ENCODE measurements at regions of chr1 and their contacts with region 1.

Region 1: GRCh38 chr1:107529502-107530149 is 388.8 kb downstream of the NTNG1 start:
- DNase-seq: peak; percentile 64
- ATAC-seq: peak; percentile 37
- H3K4me3 ChIP-seq: no peak overlapping the region
- H3K27ac ChIP-seq: no peak overlapping the region
- H3K4me1 ChIP-seq: peaks cover 70% of the 10 kb centered on the region
- H3K27me3 ChIP-seq: no peaks in the 10 kb centered on the region
- CTCF ChIP-seq: peak; percentile 89
- EP300 ChIP-seq: no peak
- POLR2A ChIP-seq: no peak
- RAD21 ChIP-seq: peak; percentile 80

Region 2: DNA sequence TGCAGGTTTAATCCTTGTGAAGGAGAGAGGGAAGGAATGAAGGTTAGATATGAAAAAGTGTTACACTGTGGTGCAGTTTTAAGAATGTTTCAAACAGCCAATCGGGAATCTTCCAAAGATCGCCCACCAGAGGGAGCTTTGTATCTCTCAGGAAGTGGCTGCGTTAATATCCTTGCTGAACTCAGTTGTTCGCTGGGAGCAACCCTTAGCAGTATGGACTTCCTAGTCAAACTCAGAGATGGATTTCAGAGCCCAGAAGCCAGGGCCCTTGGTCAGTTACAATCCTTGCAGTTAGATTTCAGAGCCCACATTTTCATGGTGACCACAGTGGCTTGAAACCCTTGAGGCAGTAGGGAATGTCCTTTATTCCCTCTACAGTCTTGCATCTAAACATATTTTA is 252.6 kb before region 1 on chr1:
- CTCF ChIA-PET with region 1: interaction called, 7 read pairs
- POLR2A ChIA-PET with region 1: no interaction called
- in situ Hi-C with region 1: loop called (anchors 5 kb)
- intact Hi-C with region 1: loop called (anchors 1 kb)
- DNase-seq: peak; percentile 46
- ATAC-seq: peak; percentile 83
- H3K4me3 ChIP-seq: no peak overlapping the region
- H3K27ac ChIP-seq: no peak overlapping the region
- H3K4me1 ChIP-seq: no peaks in the 10 kb centered on the region
- H3K27me3 ChIP-seq: no peaks in the 10 kb centered on the region
- CTCF ChIP-seq: peak; percentile 72
- EP300 ChIP-seq: no peak
- POLR2A ChIP-seq: no peak
- RAD21 ChIP-seq: peak; percentile 42; the same call in 1 of the 2 replicates

Region 3: DNA sequence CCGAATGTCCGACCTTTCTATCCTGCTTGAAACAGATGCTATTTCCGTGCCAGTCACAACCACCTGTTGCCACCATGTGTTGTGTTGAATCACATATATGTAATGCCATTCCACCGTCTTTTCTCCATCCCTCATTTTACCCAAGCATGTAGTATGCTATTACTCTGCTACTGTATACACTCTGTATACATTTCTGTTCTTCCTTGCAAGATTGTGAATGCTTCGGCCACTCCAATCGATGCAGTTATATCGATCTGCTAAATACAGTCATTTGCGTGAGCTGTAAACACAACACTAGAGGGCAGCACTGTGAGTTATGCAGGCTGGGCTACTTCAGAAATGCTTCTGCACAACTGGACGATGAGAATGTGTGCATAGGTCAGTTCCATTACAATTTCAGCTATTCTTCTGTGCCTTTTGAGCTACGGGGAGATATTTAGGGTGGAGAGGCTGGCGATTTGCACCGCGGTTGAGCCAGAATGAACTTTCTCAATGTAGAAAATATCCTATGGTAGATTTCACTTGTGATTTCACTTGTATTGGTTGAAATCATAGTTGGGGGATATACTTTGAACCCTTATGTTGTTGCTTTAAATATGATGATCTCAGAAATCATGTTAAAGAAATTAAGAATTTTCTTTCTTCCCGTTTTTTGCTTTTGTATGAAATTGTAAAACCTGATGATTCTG is 98.9 kb before region 1 on chr1:
- CTCF ChIA-PET with region 1: interaction called, 26 read pairs
- POLR2A ChIA-PET with region 1: interaction called, 3 read pairs
- in situ Hi-C with region 1: loop called (anchors 5 kb)
- intact Hi-C with region 1: loop called (anchors 1 kb)
- DNase-seq: peak; percentile 67
- ATAC-seq: peak; percentile 98
- H3K4me3 ChIP-seq: no peak overlapping the region; a peak in 1 of 6 replicates
- H3K27ac ChIP-seq: no peak overlapping the region
- H3K4me1 ChIP-seq: peaks cover 7% of the 10 kb centered on the region; the same call in 1 of the 2 replicates
- H3K27me3 ChIP-seq: no peaks in the 10 kb centered on the region
- CTCF ChIP-seq: peak; percentile 92
- EP300 ChIP-seq: no peak
- POLR2A ChIP-seq: no peak
- RAD21 ChIP-seq: peak; percentile 71

Region 4: DNA sequence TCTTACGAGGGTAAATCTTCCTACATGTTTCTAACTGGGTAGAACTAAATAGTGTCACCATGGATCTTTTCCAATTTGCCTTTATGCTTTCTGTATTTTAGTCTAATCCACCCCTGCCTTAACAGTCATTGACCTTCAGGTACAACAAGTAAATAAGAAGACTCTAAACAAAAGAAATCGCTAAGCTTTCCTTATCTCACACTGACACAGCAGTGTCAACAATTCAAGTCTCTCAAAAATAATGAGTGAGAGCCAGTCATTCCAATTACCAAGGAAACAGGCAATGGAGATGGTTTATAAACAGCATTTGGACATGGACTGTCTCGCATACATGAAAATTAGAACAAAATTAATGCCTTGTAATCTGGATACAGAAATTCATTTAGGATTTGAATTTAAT is 69.6 kb after region 1 on chr1:
- CTCF ChIA-PET with region 1: no interaction called
- POLR2A ChIA-PET with region 1: interaction called, 8 read pairs
- in situ Hi-C with region 1: no loop called
- intact Hi-C with region 1: loop called (anchors 5 kb)
- DNase-seq: peak; percentile 18
- ATAC-seq: no peak
- H3K4me3 ChIP-seq: no peak overlapping the region
- H3K27ac ChIP-seq: peak overlapping the region; percentile 69
- H3K4me1 ChIP-seq: peaks cover 49% of the 10 kb centered on the region
- H3K27me3 ChIP-seq: no peaks in the 10 kb centered on the region
- CTCF ChIP-seq: no peak
- EP300 ChIP-seq: peak in 1 of 2 experiments; percentile 23; a peak in 1 of 4 replicates
- POLR2A ChIP-seq: no peak
- RAD21 ChIP-seq: no peak

Region 5: DNA sequence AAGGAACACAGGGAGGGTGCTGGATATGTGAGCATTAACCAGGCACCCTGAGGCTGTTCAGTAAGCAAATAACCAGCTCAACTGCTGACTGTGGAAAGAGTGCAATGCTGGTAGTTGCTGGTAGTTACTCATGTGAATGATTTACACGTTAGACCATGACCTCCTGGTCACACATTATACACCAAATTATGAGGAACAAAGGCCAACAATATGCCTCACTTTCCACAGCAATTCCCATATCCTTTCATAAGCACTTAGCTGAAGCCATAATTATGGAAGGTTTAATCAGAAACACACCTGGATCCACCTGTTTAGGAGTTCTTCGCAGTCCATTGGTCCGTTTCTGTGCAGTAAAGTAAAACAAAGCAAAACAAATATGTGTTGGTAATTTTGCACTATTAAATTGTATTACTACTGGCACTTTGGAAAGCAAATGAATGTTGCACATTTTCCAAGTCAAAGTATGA is 153.6 kb after region 1 on chr1:
- CTCF ChIA-PET with region 1: no interaction called
- POLR2A ChIA-PET with region 1: interaction called, 7 read pairs
- in situ Hi-C with region 1: no loop called
- intact Hi-C with region 1: loop called (anchors 2 kb)
- DNase-seq: peak; percentile 92
- ATAC-seq: peak; percentile 87
- H3K4me3 ChIP-seq: peak overlapping the region in 2 of 3 experiments; percentile 5 to 37; a peak in 2 of 6 replicates
- H3K27ac ChIP-seq: peak overlapping the region; percentile 93
- H3K4me1 ChIP-seq: peaks cover 67% of the 10 kb centered on the region
- H3K27me3 ChIP-seq: no peaks in the 10 kb centered on the region
- CTCF ChIP-seq: no peak
- EP300 ChIP-seq: peak in 1 of 2 experiments; percentile 83; a peak in 2 of 4 replicates
- POLR2A ChIP-seq: peak; percentile 62 to 70
- RAD21 ChIP-seq: no peak

Region 6: GRCh38 chr1:107914134-107914765 is 384.6 kb after region 1 on chr1:
- CTCF ChIA-PET with region 1: no interaction called
- POLR2A ChIA-PET with region 1: no interaction called
- in situ Hi-C with region 1: no loop called
- intact Hi-C with region 1: no loop called
- DNase-seq: no peak
- ATAC-seq: no peak
- H3K4me3 ChIP-seq: no peak overlapping the region
- H3K27ac ChIP-seq: no peak overlapping the region
- H3K4me1 ChIP-seq: no peaks in the 10 kb centered on the region
- H3K27me3 ChIP-seq: no peaks in the 10 kb centered on the region
- CTCF ChIP-seq: no peak
- EP300 ChIP-seq: no peak
- POLR2A ChIP-seq: no peak
- RAD21 ChIP-seq: no peak